Uterus (tissue), 4 donors: ENCODE measurements at regions of chr3 and their contacts with region 1.

Region 1: DNA sequence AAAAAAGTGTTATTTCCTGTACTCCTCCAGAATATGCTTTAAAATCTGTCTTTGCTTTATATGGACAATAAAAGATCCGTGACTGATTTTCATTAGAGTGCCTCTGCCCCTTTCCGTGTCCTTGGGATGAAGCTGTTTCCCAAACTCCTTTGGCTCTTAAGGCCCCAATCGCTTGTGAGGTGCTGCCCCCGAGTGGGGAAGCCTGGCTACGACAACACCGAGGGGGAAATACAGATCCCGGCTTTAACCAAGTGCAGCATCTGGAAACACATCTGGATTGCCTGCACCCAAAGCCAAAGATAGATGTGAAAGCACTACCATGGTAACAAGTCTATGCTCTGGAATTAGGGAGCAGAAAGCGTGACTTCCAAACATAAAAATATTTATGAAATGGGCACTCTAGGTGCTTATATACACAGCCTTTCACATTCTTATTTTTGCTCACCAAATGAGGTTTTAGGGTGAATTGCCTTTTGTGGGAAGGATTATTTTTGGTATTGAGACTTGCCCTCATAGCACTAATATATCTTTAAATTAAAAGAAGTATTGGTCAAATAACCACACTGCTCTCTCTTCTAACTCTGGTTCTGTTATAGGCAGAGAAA is 40.6 kb upstream of the ADCY5 start:
- DNase-seq: peak; percentile 74 to 82
- H3K4me3 ChIP-seq: no peak overlapping the region
- H3K27ac ChIP-seq: peak overlapping the region in 1 of 2 donors; percentile 57
- H3K4me1 ChIP-seq: no peaks in the 10 kb centered on the region
- H3K27me3 ChIP-seq: no peaks in the 10 kb centered on the region
- CTCF ChIP-seq: peak; percentile 87 to 94 (median 90)
- POLR2A ChIP-seq: no peak

Region 2: GRCh38 chr3:123328851-123329635 is 160.5 kb before region 1 on chr3:
- intact Hi-C with region 1: loop called (anchors 2 kb)
- DNase-seq: peak; percentile 81 to 82
- H3K4me3 ChIP-seq: no peak overlapping the region
- H3K27ac ChIP-seq: peak overlapping the region in 1 of 2 donors; percentile 80
- H3K4me1 ChIP-seq: no peaks in the 10 kb centered on the region
- H3K27me3 ChIP-seq: no peaks in the 10 kb centered on the region
- CTCF ChIP-seq: peak; percentile 91 to 95 (median 95)
- POLR2A ChIP-seq: no peak